ENCODE measurements at regions of chr5 and their contacts with region 1.

Region 1: GRCh38 chr5:95870105-95870672 is 47.7 kb upstream of the GLRX start:
- DNase-seq: peak; percentile 80
- H3K4me3 Mint-ChIP-seq: peak overlapping the region; percentile 60
- H3K27ac Mint-ChIP-seq: peak overlapping the region; percentile 92
- H3K4me1 Mint-ChIP-seq: peaks cover 41% of the 10 kb centered on the region
- H3K27me3 Mint-ChIP-seq: no peaks in the 10 kb centered on the region

Region 2: DNA sequence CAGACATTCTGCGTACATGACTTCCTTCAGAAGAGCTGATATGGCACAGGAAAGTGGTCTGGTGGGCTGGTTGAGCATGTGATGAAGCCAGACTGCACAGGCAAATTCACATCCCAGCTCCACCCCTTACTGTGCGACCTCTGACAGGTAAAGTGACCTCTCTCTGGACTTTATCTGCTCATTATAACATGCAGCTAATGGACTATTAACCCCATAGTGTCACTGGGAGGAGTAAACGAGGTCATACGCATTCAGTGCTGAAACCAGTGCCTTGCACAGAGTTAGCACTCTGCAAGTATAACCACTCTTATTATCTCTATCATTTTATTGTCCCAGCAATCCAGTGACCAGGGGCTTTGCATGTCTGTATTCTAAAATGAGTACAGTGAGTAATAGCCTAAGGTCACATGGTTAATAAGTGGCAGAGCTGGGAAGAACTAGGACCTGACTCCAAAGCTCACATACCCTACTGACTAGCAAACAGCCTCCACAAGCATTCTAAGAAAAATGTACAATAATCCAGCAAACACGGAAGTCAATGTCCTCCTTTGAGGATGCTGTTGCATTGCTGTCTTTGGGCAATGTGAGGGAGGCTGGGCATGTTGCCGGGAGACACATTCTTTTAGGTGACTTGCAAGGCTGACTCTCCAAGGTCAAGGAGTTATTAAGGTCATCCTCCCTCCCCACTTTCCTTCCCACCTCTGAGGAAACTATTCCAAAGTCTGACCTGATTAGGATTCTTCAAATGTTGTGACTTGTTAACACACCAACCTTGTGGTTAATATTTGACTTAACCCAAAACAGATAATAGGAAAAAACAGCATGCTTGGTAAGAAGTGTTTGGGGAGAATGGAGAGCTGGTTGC is 66.7 kb before region 1 on chr5:
- intact Hi-C with region 1: no loop called
- DNase-seq: no peak
- H3K4me3 Mint-ChIP-seq: no peak overlapping the region
- H3K27ac Mint-ChIP-seq: no peak overlapping the region
- H3K4me1 Mint-ChIP-seq: peaks cover 11% of the 10 kb centered on the region
- H3K27me3 Mint-ChIP-seq: no peaks in the 10 kb centered on the region

Region 3: GRCh38 chr5:95846554-95847260 is 23.5 kb before region 1 on chr5:
- intact Hi-C with region 1: loop called (anchors 2 kb)
- DNase-seq: peak; percentile 90
- H3K4me3 Mint-ChIP-seq: no peak overlapping the region
- H3K27ac Mint-ChIP-seq: no peak overlapping the region
- H3K4me1 Mint-ChIP-seq: peaks cover 27% of the 10 kb centered on the region
- H3K27me3 Mint-ChIP-seq: peaks cover 16% of the 10 kb centered on the region

Region 4: GRCh38 chr5:95883613-95884325 is 13.6 kb after region 1 on chr5:
- intact Hi-C with region 1: no loop called
- DNase-seq: peak; percentile 46
- H3K4me3 Mint-ChIP-seq: no peak overlapping the region
- H3K27ac Mint-ChIP-seq: no peak overlapping the region
- H3K4me1 Mint-ChIP-seq: peaks cover 11% of the 10 kb centered on the region
- H3K27me3 Mint-ChIP-seq: no peaks in the 10 kb centered on the region

Region 5: DNA sequence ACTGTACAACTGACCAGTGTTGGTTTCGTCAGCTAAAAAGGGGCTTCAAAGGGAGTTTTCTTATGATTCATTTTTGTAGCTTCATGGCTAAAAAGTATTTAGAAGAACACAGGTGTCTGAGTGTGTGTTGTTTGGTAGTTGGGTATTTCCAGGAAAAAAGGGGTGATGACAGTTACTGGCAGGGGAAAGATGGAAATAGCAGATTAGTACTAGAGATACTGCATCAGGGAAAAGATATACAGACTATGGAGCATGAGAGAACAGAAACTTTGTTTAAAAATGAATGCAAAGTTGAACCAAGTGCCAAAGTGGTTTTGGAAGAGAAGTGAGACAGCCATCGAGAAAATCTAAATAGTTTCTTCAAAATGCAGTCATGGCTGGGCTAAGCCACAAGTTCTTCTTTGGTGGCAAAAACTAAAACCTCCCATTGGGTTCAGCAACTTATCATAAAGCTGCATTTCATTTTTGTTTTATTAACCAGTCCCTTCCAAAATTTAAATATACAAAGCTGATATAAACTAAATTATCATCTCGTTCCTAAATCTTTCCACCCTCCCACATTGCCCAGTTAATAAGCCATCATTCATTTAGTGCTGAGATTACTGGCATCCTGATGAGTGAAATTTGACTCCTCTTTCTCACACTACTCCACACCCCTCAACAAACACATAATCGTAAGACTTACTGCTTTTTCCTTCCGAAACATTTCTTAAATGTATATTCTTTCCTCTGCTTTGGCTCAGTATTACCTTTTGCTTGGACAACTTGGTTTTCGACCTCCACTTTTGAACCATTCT is 57.9 kb after region 1 on chr5:
- intact Hi-C with region 1: loop called (anchors 1 kb)
- DNase-seq: peak; percentile 61
- H3K4me3 Mint-ChIP-seq: peak overlapping the region; percentile 48
- H3K27ac Mint-ChIP-seq: peak overlapping the region; percentile 82
- H3K4me1 Mint-ChIP-seq: peaks cover 58% of the 10 kb centered on the region
- H3K27me3 Mint-ChIP-seq: no peaks in the 10 kb centered on the region

Region 6: DNA sequence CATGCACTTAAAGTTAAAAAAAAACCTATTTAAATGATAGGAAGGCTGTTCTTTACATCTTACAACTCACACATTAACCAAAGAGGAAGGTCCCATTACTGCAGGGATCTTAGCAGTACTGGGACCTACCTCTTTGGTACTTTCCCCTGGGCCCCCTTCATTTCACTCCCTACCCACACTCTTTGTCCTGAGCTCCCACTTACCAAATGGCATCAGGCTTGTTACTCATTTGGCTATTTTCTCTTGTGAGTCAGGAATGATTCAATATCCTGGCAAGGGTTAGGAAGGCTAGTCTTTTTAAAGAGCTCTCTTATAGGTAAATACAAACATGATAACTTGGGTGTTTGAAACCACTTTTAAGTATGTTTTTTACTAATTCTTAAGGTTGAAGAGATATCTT is 208.9 kb after region 1 on chr5:
- intact Hi-C with region 1: loop called (anchors 1 kb)
- DNase-seq: no peak
- H3K4me3 Mint-ChIP-seq: peak overlapping the region; percentile 42
- H3K27ac Mint-ChIP-seq: peak overlapping the region; percentile 87
- H3K4me1 Mint-ChIP-seq: peaks cover 45% of the 10 kb centered on the region
- H3K27me3 Mint-ChIP-seq: no peaks in the 10 kb centered on the region

Region 7: DNA sequence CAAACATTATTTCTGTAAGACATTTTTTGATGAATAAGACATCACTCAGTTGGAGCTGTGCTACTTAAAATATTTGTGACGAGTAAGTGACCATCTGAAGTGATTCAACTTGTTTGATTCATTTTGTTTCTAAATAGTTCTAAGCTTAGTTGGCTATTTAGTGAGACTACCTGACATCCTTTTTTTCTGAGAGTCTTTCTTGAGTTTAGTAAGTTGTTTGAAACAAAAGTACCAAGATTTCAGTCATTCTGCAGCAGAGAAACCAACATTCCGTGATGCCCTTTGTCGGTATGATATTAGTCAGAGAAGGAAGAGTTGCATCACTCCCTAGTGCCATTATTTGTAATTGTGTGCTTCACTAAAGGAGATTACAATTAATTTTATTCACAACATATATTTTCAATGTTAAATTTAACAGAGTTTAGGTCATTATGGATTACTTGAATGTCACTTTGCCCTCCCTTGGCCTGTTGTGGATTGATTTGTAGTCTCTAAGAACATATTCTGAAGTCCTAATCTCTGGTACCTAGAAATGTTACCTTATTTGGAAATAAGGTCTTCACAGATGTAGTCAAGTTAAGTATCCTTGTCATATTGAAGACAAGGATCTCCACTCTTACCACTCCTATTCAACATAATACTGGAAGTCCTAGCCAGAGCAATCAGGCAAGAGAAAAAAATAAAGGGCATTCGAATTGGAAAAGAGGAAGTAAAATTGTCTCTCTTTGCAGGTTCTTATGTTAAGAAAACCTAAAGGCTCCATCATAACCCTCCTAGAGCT is 350.6 kb after region 1 on chr5:
- intact Hi-C with region 1: loop called (anchors 1 kb)
- DNase-seq: no peak
- H3K4me3 Mint-ChIP-seq: no peak overlapping the region
- H3K27ac Mint-ChIP-seq: peak overlapping the region; percentile 60
- H3K4me1 Mint-ChIP-seq: peaks cover 2% of the 10 kb centered on the region
- H3K27me3 Mint-ChIP-seq: no peaks in the 10 kb centered on the region

Region 8: GRCh38 chr5:96536991-96537785 is 667.0 kb after region 1 on chr5:
- intact Hi-C with region 1: loop called (anchors 2 kb)
- DNase-seq: peak; percentile 83
- H3K4me3 Mint-ChIP-seq: peak overlapping the region; percentile 56
- H3K27ac Mint-ChIP-seq: peak overlapping the region; percentile 85
- H3K4me1 Mint-ChIP-seq: peaks cover 27% of the 10 kb centered on the region
- H3K27me3 Mint-ChIP-seq: peaks cover 7% of the 10 kb centered on the region

Measured in activated CD4-positive, alpha-beta T cell treated with anti-CD3 and anti-CD28 coated beads, Interleukin-2, amount 10 ng/mL, durations not matched to agents 24 days and 14 days (primary cell).